ENCODE measurements at regions of chr14 and their contacts with region 1.

Region 1: GRCh38 chr14:69818757-69819191 is 21.7 kb upstream of the SLC10A1 start:
- DNase-seq: peak; percentile 6 to 74 (median 25)
- ATAC-seq: peak; percentile 73
- H3K4me3 ChIP-seq: no peak overlapping the region
- H3K4me3 Mint-ChIP-seq: no peak overlapping the region
- H3K27ac ChIP-seq: no peak overlapping the region
- H3K27ac Mint-ChIP-seq: no peak overlapping the region
- H3K4me1 ChIP-seq: no peaks in the 10 kb centered on the region
- H3K4me1 Mint-ChIP-seq: peaks cover 4% of the 10 kb centered on the region
- H3K27me3 ChIP-seq: no peaks in the 10 kb centered on the region
- H3K27me3 Mint-ChIP-seq: peaks cover 3% of the 10 kb centered on the region
- CTCF ChIP-seq: peak; percentile 89

Region 2: GRCh38 chr14:70073924-70074566 is 255.3 kb after region 1 on chr14:
- CTCF ChIA-PET with region 1: no interaction called
- POLR2A ChIA-PET with region 1: no interaction called
- intact Hi-C with region 1: loop called (anchors 5 kb)
- DNase-seq: peak in 5 of 9 experiments; percentile 2 to 40 (median 18)
- ATAC-seq: no peak
- H3K4me3 ChIP-seq: no peak overlapping the region
- H3K4me3 Mint-ChIP-seq: no peak overlapping the region
- H3K27ac ChIP-seq: no peak overlapping the region
- H3K27ac Mint-ChIP-seq: no peak overlapping the region
- H3K4me1 ChIP-seq: no peaks in the 10 kb centered on the region
- H3K4me1 Mint-ChIP-seq: no peaks in the 10 kb centered on the region
- H3K27me3 ChIP-seq: no peaks in the 10 kb centered on the region
- H3K27me3 Mint-ChIP-seq: peaks cover 25% of the 10 kb centered on the region
- CTCF ChIP-seq: peak; percentile 25

Region 3: DNA sequence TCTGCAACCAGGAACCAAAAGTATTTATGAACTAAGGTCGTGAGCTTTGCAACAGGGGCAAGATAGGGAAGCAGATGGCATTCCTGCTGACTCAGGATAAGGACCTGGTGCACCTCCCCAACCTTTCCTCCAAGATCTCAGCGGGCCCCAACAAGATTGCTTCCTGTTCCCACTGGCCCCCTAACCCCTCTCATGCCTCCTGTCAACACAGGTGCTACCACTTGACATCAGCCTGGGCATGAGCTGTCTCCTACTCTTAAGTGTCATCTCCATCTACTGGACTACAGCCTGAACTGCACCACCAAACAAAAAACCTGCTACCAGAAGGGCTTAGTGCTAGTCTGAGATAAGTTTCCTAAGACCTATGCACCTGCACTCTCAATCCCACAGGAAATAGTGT is 749.0 kb after region 1 on chr14:
- CTCF ChIA-PET with region 1: no interaction called
- POLR2A ChIA-PET with region 1: no interaction called
- intact Hi-C with region 1: loop called in 1 of 2 experiments (anchors 2 kb)
- DNase-seq: peak in 2 of 9 experiments; percentile 7 to 13
- ATAC-seq: no peak
- H3K4me3 ChIP-seq: no peak overlapping the region
- H3K4me3 Mint-ChIP-seq: no peak overlapping the region
- H3K27ac ChIP-seq: no peak overlapping the region
- H3K27ac Mint-ChIP-seq: no peak overlapping the region
- H3K4me1 ChIP-seq: no peaks in the 10 kb centered on the region
- H3K4me1 Mint-ChIP-seq: peaks cover 30% of the 10 kb centered on the region
- H3K27me3 ChIP-seq: no peaks in the 10 kb centered on the region
- H3K27me3 Mint-ChIP-seq: no peaks in the 10 kb centered on the region
- CTCF ChIP-seq: no peak

Region 4: GRCh38 chr14:70821584-70822529 is 1003.1 kb after region 1 on chr14:
- CTCF ChIA-PET with region 1: no interaction called
- POLR2A ChIA-PET with region 1: no interaction called
- intact Hi-C with region 1: loop called (anchors 1 to 10 kb)
- DNase-seq: peak in 8 of 9 experiments; percentile 35 to 73 (median 58)
- ATAC-seq: peak; percentile 39
- H3K4me3 ChIP-seq: peak overlapping the region; percentile 57 to 67
- H3K4me3 Mint-ChIP-seq: peak overlapping the region; percentile 76
- H3K27ac ChIP-seq: peak overlapping the region in 1 of 2 experiments; percentile 15
- H3K27ac Mint-ChIP-seq: no peak overlapping the region
- H3K4me1 ChIP-seq: peaks cover 17% of the 10 kb centered on the region
- H3K4me1 Mint-ChIP-seq: peaks cover 16% of the 10 kb centered on the region
- H3K27me3 ChIP-seq: no peaks in the 10 kb centered on the region
- H3K27me3 Mint-ChIP-seq: peaks cover 7% of the 10 kb centered on the region
- CTCF ChIP-seq: no peak

Region 5: DNA sequence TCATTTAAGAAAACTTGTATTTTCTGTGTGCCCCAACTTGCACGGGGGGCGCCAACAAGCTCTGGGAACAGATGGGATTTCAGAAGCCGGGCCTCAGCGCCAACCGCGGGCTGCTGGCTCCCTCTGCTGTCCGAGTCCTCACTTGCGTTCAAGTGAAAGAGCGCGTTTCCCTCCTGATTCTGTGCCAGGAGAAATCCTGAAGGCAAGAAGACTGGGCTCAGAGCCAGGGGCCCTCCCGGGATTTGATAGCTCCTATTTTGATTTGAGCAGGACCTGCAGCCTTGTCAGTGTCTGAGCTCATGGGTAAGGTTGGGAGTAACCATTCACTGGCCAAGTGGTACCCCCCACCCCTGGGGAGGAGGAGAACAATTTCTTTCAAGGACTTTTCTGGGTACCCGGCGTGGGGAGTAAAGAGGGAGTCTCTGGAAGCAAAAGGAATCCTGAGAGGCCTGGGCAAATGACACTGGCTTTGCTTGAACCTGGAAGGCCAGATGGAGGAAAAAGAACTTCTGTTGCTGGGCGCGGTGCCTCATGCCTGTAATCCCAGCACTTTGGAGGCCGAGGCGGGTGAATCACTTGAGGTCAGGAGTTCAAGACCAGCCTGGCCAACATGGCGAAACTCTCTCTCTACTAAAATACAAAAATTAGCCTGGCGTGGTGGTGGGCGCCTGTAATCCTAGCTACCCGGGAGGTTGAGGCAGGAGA is 1934.5 kb after region 1 on chr14:
- CTCF ChIA-PET with region 1: no interaction called
- POLR2A ChIA-PET with region 1: no interaction called
- intact Hi-C with region 1: loop called in 1 of 2 experiments (anchors 10 kb)
- DNase-seq: peak; percentile 48 to 81 (median 73)
- ATAC-seq: peak; percentile 58
- H3K4me3 ChIP-seq: no peak overlapping the region
- H3K4me3 Mint-ChIP-seq: no peak overlapping the region
- H3K27ac ChIP-seq: no peak overlapping the region
- H3K27ac Mint-ChIP-seq: no peak overlapping the region
- H3K4me1 ChIP-seq: peaks cover 4% of the 10 kb centered on the region
- H3K4me1 Mint-ChIP-seq: no peaks in the 10 kb centered on the region
- H3K27me3 ChIP-seq: no peaks in the 10 kb centered on the region
- H3K27me3 Mint-ChIP-seq: no peaks in the 10 kb centered on the region
- CTCF ChIP-seq: peak; percentile 90

Measured in CD8-positive, alpha-beta T cell (primary cell).